HEK293 (cell line): ENCODE measurements at regions of chr3 and their contacts with region 1.

Region 1: DNA sequence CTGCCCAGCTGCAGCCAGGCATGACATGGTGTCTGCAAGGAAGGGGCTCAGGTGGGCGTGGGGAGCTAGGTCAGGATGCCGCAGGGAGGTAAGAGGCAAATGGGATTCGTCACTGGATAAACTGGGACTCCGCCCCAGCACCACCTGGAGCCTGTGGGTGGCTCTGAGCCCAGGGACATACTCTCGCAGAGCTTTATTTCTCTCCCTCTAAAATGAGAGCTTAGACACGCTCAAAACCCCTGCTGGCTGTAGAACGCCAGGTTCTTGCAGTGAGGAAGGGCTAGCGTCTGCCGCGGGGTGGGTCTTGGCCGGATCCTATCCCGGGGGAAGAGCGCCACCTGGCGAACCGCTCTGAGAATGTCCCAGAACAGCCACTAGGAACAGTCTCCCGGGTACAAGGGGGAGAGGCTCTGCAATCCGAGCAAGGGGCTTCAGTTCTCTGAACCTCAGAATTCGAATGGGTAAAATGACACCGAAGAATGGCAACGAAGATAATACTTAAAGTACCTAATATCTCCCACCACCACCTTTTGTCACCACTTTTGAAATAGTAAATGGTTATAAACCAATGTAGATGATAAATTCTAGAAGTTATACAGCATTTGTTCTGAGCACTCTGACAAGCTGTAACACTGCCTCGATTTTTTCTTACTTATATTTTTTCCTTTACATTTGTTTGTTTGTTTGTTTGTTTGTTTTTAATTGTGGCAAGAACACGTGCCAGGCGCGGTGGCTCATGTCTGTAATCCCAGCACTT is 53.2 kb upstream of the SRGAP3 start:
- H3K4me3 ChIP-seq: peak overlapping the region; percentile 18
- H3K27ac ChIP-seq: no peak overlapping the region
- H3K4me1 ChIP-seq: no peaks in the 10 kb centered on the region
- CTCF ChIP-seq: peak; percentile 95

Region 2: GRCh38 chr3:8980756-8981257 is 321.8 kb before region 1 on chr3:
- CTCF ChIA-PET with region 1: interaction called, 136 read pairs
- POLR2A ChIA-PET with region 1: no interaction called
- H3K4me3 ChIP-seq: no peak overlapping the region
- H3K27ac ChIP-seq: no peak overlapping the region
- H3K4me1 ChIP-seq: no peaks in the 10 kb centered on the region
- CTCF ChIP-seq: no peak

Region 3: GRCh38 chr3:9067352-9067975 is 235.1 kb before region 1 on chr3:
- CTCF ChIA-PET with region 1: interaction called, 26 read pairs
- POLR2A ChIA-PET with region 1: no interaction called
- H3K4me3 ChIP-seq: no peak overlapping the region
- H3K27ac ChIP-seq: no peak overlapping the region
- H3K4me1 ChIP-seq: no peaks in the 10 kb centered on the region
- CTCF ChIP-seq: peak; percentile 68

Region 4: DNA sequence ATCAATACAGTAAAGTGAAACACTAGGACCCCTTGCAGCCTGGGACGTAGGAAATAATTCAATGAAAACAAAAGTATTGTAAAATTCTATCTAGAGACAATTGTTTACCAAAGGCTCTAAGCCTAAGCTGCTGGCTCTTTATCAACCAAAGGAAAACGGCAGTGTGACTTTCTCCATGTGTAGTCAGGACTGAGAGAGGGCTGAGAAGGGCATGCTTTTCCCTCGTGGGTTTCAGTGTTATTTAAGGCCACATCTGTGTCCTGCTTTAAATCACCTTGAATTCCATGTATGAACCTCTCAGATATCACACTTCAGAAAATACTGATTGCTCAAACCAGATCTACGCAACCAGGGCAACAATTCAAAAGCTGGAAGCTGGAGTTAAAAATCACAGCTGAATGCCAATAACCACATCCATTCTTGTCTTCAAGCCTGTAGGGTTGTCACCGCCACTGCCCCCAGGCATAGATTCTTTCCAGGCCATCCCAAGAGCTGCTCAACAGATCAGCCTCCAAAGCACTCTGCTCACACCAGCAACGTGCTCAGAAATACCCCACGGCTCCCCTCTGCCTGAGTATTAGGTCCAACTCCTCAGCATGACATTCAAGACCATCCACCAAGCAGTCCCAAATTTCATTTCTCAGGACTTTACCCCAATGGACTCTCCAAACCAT is 177.2 kb before region 1 on chr3:
- CTCF ChIA-PET with region 1: interaction called, 11 read pairs
- POLR2A ChIA-PET with region 1: no interaction called
- H3K4me3 ChIP-seq: no peak overlapping the region
- H3K27ac ChIP-seq: no peak overlapping the region
- H3K4me1 ChIP-seq: peaks cover 1% of the 10 kb centered on the region; the same call in 1 of the 2 replicates
- CTCF ChIP-seq: no peak

Region 5: GRCh38 chr3:9280451-9281219 is 22.0 kb before region 1 on chr3:
- CTCF ChIA-PET with region 1: interaction called, 12 read pairs
- POLR2A ChIA-PET with region 1: no interaction called
- H3K4me3 ChIP-seq: no peak overlapping the region
- H3K27ac ChIP-seq: peak overlapping the region; percentile 22; the same call in 1 of the 2 replicates
- H3K4me1 ChIP-seq: peaks cover 15% of the 10 kb centered on the region
- CTCF ChIP-seq: no peak

Region 6: GRCh38 chr3:9316881-9317361 is 14.3 kb after region 1 on chr3:
- CTCF ChIA-PET with region 1: interaction called, 10 read pairs
- POLR2A ChIA-PET with region 1: no interaction called
- H3K4me3 ChIP-seq: no peak overlapping the region
- H3K27ac ChIP-seq: no peak overlapping the region
- H3K4me1 ChIP-seq: no peaks in the 10 kb centered on the region
- CTCF ChIP-seq: no peak

Region 7: DNA sequence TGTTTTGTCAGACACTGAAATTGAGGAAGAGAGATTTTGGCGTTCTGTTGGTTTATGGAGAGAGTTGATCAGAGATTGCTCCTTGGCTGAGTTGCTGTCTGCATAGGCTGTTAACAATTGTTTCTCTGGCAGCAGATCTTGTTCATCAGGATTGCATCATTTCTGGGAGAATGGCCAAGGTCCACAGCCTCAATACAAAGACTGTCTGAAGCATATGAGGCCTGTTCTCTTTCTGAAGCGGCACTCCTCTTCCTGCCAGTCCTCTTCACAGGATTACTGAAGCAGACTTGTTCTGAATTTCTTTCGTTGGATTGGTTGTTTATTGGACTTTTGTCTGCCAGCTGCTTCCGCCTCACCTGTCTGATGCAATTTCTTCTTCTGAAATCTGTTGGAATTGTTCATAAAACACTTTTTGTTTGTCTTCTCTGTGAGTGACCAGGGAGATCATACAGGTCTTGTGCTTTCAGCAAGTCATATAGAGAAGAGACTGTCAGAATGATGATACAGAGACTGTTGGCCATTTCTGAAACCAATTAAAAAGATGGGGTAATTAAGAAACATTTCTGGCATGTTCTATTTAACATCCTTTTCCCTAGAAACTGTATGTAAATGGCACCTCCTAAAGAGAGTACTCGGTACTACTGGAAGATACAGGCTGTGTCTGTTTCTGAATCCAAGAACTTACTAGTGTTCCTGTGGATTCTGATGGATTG is 120.3 kb after region 1 on chr3:
- CTCF ChIA-PET with region 1: no interaction called
- POLR2A ChIA-PET with region 1: no interaction called
- H3K4me3 ChIP-seq: no peak overlapping the region
- H3K27ac ChIP-seq: peak overlapping the region; percentile 82
- H3K4me1 ChIP-seq: peaks cover 20% of the 10 kb centered on the region
- CTCF ChIP-seq: no peak